RWPE1 (cell line): ENCODE measurements at regions of chr6 and their contacts with region 1.

Region 1: DNA sequence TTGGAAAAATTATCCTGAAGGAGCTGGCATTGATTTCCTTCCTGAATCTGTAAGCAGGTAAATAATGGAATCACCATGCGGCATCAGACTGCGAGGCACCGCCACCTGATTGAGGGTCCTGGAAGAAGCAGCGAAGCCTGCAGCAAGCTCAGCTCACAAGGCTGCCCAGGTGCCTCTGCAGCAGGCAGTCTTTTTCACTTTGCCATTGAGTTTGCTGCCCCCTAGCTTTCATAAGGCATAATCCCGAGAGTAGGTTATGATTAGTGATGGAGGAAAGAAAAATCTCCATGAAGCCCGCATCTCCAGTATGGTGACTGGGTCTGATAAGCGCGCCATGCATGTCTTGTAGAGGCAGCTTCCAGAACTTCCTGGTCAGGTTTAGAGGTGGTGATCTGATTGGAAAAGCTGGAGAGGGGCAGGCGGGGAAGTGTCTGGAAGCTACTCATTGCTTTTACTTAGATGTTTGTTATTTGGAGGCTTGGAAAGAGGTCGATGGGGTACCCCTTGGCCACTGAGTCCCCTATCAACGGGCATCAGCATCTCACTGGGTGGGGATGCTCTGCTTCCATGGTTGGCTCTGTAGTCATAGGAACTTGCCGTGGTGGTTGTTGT is 26.7 kb downstream of the IYD start:
- DNase-seq: peak; percentile 65
- H3K27ac ChIP-seq: no peak overlapping the region
- CTCF ChIP-seq: peak; percentile 72

Region 2: DNA sequence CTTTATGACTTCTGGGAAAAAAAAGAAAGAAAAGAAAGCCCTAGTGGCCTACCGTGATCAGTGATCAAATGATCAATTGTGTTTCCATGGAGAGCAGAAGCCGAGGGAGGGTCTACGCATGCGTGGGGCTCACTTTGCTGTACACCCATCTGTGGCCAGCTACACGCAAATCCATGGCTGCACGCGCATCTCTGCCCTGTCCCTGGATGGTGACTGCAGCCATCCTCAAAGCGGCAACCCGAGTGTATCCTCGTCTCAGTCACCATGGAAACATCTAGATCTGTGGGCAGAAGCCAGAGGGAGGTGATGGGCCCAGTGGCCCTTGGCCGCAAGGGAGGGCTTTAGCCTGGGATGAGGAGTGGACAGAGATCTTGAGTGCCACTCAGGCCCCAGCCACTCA is 325.8 kb before region 1 on chr6:
- CTCF ChIA-PET with region 1: interaction called, 15 read pairs
- POLR2A ChIA-PET with region 1: no interaction called
- DNase-seq: no peak
- H3K27ac ChIP-seq: peak overlapping the region; percentile 83
- CTCF ChIP-seq: no peak

Region 3: GRCh38 chr6:150079604-150080003 is 315.9 kb before region 1 on chr6:
- CTCF ChIA-PET with region 1: interaction called, 15 read pairs
- POLR2A ChIA-PET with region 1: no interaction called
- DNase-seq: no peak
- H3K27ac ChIP-seq: 0 out of 2 replicates have a peak overlapping the region, but pooled peaks have one; percentile 41
- CTCF ChIP-seq: no peak

Region 4: DNA sequence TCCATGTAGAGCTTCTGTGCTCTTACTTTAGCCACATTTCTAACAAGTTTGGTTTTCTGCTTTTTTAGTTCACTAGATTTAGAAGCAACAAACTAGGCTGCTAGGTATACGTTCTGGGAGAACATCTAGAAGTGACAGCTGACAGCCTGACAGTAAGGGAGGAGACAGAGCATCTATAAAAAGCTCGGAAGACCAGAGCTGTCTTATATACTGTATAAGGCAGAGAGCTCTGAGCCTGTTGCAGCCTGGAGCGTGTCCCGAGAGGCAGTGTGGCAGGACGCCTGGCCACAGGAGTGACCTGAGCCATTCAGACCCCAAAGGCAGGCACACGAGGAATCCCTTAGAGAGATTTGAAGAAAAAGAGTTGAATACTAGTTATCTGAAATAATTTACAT is 228.0 kb before region 1 on chr6:
- CTCF ChIA-PET with region 1: no interaction called
- POLR2A ChIA-PET with region 1: no interaction called
- DNase-seq: no peak
- H3K27ac ChIP-seq: peak overlapping the region; percentile 60
- CTCF ChIP-seq: no peak

Region 5: DNA sequence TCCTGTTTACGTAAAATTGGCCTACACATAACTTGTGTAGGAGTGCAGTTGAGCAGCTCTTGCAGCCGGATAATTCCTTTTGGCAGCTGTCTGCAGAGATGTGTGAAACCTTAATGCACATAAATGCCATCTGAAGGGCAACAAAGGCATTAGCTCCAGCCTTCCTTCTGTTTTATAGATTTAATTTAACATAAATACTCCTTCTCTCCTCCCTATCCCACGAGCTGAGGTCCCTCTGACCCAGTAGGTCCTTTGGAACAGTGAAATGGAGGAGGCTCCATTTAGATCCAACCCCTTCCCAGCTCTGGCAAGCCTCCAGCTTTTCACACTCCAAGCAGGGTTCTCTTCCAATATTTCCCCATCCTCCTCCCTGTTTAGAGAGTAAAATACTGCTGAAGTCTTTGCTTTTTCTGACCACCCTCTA is 210.7 kb after region 1 on chr6:
- CTCF ChIA-PET with region 1: no interaction called
- POLR2A ChIA-PET with region 1: no interaction called
- DNase-seq: no peak
- H3K27ac ChIP-seq: no peak overlapping the region
- CTCF ChIP-seq: no peak